ENCODE measurements at regions of chr3 and their contacts with region 1.

Region 1: DNA sequence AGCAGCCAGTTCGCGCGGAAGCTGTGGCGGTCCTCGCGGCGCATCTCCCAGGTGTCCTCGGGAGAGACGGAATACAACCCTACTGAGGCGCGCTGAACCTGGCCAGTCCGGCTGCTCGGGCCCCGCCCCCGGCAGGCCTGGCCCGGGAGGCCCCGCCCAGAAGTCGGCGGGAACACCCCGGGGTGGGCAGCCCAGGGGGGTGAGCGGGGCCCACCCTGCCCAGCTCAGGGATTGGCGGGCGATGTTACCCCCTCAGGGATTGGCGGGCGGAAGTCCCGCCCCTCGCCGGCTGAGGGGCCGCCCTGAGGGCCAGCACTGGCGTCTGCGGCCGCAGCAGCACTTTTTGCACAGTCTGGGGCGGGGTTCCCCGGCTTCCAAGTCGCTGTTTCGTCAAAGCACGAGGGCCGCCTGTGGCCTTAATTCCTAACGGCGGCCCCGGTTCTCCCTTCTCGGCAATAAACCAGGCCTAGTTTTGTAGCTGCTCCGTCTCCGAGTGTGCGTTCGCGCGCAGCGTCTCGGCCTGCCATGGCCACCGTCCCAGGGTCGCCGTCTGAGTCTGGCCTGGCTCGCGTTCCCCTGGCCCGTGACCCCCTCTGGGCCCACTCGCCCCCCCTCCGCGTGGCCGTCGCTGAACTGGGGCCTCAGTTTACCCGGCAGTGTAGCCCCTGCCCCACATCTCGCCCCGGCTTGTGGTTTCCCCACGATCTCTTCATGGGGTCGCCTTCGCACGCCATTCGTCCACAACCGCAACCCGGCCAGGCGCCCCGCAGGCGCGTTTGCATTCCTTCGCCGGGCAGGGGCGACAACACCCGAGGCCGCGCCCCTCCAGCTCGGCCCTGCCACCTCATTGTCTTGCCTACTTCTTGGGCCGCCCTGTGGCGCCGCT is 30.0 kb downstream of the NBEAL2 start:
- DNase-seq: peak; percentile 51 to 75 (median 68)
- ATAC-seq: peak; percentile 93
- H3K4me3 ChIP-seq: peak overlapping the region; percentile 46
- H3K4me3 Mint-ChIP-seq: peak overlapping the region in 9 of 10 donors; percentile 64 to 86 (median 77)
- H3K27ac ChIP-seq: peak overlapping the region; percentile 73
- H3K27ac Mint-ChIP-seq: peak overlapping the region in 6 of 9 donors; percentile 40 to 83 (median 76)
- H3K4me1 ChIP-seq: no peaks in the 10 kb centered on the region
- H3K4me1 Mint-ChIP-seq: peaks cover 5 to 23% (median 7%) of the 10 kb centered on the region in 7 donors
- H3K27me3 ChIP-seq: no peaks in the 10 kb centered on the region
- H3K27me3 Mint-ChIP-seq: no peaks in the 10 kb centered on the region

Region 2: DNA sequence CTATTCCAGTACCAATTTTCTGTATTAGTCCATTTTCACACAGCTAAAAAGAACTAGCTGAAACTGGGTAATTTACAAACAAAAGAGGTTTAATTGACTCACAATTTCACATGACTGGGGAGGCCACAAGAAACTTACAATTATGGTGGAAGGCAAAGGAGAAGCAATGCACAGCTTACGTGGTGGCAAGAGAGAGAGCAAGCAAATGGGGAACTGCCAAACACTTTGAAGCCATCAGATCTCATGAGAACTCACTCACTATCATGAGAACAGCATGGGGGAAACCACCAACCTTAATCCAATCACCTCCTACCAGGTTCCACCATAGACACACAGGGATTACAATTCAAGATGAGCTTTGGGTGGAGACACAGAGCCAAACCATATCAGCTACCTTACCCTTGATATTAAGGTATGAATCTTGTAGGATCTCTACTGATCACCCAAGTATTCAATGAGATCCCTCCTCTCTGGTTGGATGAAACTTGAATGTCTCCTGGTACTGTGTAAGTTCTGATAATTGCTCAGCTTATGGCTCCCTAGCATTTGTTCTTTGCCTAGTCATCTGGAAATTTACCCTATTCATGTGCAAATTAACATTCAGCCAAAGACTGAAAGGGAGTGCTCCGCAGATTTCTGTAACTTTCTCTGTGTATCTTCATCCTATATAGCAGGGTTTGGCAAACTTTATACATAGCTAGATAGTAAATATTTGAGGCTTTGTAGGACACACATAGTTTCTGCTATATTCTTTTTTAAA is 185.1 kb before region 1 on chr3:
- CTCF ChIA-PET with region 1: no interaction called
- POLR2A ChIA-PET with region 1: no interaction called
- intact Hi-C with region 1: no loop called
- DNase-seq: no peak
- ATAC-seq: no peak
- H3K4me3 ChIP-seq: no peak overlapping the region
- H3K4me3 Mint-ChIP-seq: no peak overlapping the region
- H3K27ac ChIP-seq: no peak overlapping the region
- H3K27ac Mint-ChIP-seq: no peak overlapping the region
- H3K4me1 ChIP-seq: no peaks in the 10 kb centered on the region
- H3K4me1 Mint-ChIP-seq: peaks cover 0 to 8% (median 4%) of the 10 kb centered on the region in 7 donors
- H3K27me3 ChIP-seq: no peaks in the 10 kb centered on the region
- H3K27me3 Mint-ChIP-seq: peaks cover 8 to 22% (median 13%) of the 10 kb centered on the region in 5 donors

Region 3: GRCh38 chr3:46987743-46988401 is 21.6 kb before region 1 on chr3:
- CTCF ChIA-PET with region 1: no interaction called
- POLR2A ChIA-PET with region 1: no interaction called
- intact Hi-C with region 1: loop called (anchors 1 kb)
- DNase-seq: peak; percentile 75 to 90 (median 86)
- ATAC-seq: peak; percentile 98
- H3K4me3 ChIP-seq: peak overlapping the region; percentile 43
- H3K4me3 Mint-ChIP-seq: peak overlapping the region; percentile 60 to 91 (median 78)
- H3K27ac ChIP-seq: peak overlapping the region; percentile 38
- H3K27ac Mint-ChIP-seq: peak overlapping the region; percentile 84 to 91 (median 88)
- H3K4me1 ChIP-seq: peaks cover 50 to 55% of the 10 kb centered on the region in 2 donors
- H3K4me1 Mint-ChIP-seq: peaks cover 51 to 79% (median 71%) of the 10 kb centered on the region in 7 donors
- H3K27me3 ChIP-seq: no peaks in the 10 kb centered on the region
- H3K27me3 Mint-ChIP-seq: no peaks in the 10 kb centered on the region